ENCODE measurements at regions of chr11 and their contacts with region 1.

Region 1: DNA sequence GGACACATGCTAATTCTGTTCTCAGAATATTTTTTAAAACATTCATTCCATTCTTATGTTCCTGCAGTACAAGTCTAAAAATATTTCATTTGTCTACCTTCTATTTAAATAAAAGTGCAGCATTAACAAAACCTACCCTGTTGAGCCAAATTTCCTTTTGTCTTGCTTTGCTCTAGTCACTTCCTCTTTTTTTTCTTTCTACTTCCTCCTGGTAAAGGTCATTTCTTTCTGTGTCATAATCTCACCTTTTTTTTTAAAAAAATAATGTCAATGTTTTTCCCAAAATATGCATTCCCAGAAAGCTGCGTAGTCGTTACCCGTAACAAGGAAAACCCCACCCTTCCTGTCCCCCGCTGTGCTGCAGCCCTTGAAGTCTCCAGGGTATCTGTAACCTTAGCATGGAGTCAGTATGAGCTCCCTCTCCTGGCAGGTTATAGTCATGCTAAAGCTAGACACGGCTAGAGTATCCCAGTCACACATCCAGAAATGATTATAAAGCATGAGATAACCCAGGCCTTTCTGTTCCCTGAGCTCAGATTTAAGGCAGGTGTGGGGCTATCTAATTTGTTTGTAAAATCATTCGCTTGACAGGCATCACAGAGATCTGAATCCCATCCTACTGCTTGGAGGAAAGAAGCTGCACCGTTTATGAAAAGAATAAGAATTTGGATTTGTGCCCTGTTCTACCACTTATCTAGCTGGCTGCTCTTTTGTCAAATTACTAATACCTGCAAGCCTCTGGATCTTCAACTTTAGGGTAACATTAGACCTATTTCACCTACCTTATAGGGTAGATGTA is 51.1 kb upstream of the EED start:
- DNase-seq: peak; percentile 37 to 84
- ATAC-seq: peak; percentile 94 to 100 (median 99)
- H3K4me3 ChIP-seq: peak overlapping the region; percentile 12
- H3K4me3 Mint-ChIP-seq: peak overlapping the region; percentile 83
- H3K27ac ChIP-seq: peak overlapping the region; percentile 63
- H3K27ac Mint-ChIP-seq: peak overlapping the region; percentile 77 to 85
- H3K4me1 ChIP-seq: peaks cover 4% of the 10 kb centered on the region
- H3K4me1 Mint-ChIP-seq: peaks cover 15 to 16% of the 10 kb centered on the region in 2 donors
- H3K27me3 ChIP-seq: no peaks in the 10 kb centered on the region
- H3K27me3 Mint-ChIP-seq: no peaks in the 10 kb centered on the region
- CTCF ChIP-seq: peak; percentile 85

Region 2: DNA sequence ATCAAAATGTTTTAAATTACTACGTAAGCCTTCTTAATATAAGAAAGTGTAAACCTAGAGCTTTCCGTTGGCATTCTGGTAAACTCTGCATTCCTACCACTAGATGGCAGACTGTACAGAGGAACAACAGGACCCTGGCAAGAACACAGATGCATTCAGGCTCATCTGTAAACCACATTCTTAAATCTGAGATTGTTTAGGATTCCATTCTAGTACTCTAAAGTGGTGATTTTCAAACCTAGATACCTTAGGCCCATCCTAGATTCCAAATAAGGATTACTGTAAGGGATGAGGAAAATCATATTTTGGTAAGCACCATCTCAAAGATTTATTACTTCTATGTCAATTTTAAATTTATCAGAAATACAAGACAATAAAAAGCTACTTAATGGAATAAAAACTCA is 151.5 kb before region 1 on chr11:
- intact Hi-C with region 1: loop called (anchors 1 kb)
- DNase-seq: peak in 1 of 2 donors; percentile 88
- ATAC-seq: peak; percentile 92 to 95 (median 95)
- H3K4me3 ChIP-seq: no peak overlapping the region
- H3K4me3 Mint-ChIP-seq: peak overlapping the region; percentile 40
- H3K27ac ChIP-seq: no peak overlapping the region
- H3K27ac Mint-ChIP-seq: peak overlapping the region; percentile 76 to 83
- H3K4me1 ChIP-seq: peaks cover 22% of the 10 kb centered on the region
- H3K4me1 Mint-ChIP-seq: peaks cover 64 to 70% of the 10 kb centered on the region in 2 donors
- H3K27me3 ChIP-seq: no peaks in the 10 kb centered on the region
- H3K27me3 Mint-ChIP-seq: no peaks in the 10 kb centered on the region
- CTCF ChIP-seq: peak; percentile 94

Region 3: GRCh38 chr11:86068951-86069407 is 124.5 kb before region 1 on chr11 and contains the start of gene PICALM:
- intact Hi-C with region 1: loop called (anchors 2 kb)
- DNase-seq: peak; percentile 90 to 99
- ATAC-seq: peak; percentile 71 to 92 (median 81)
- H3K4me3 ChIP-seq: peak within 1 kb of the TSS; percentile 76
- H3K4me3 Mint-ChIP-seq: peak within 1 kb of the TSS; percentile 100
- H3K27ac ChIP-seq: peak within 1 kb of the TSS; percentile 91
- H3K27ac Mint-ChIP-seq: peak within 1 kb of the TSS; percentile 97 to 100
- H3K4me1 ChIP-seq: peaks cover 20% of the 10 kb centered on the region
- H3K4me1 Mint-ChIP-seq: peaks cover 47 to 49% of the 10 kb centered on the region in 2 donors
- H3K27me3 ChIP-seq: no peaks in the 10 kb centered on the region
- H3K27me3 Mint-ChIP-seq: no peaks in the 10 kb centered on the region
- CTCF ChIP-seq: no peak
- total RNA-seq, gene PICALM: 262 to 291 (median 285) TPM

Region 4: GRCh38 chr11:86091566-86091965 is 101.9 kb before region 1 on chr11:
- intact Hi-C with region 1: no loop called
- DNase-seq: no peak
- ATAC-seq: no peak
- H3K4me3 ChIP-seq: no peak overlapping the region
- H3K4me3 Mint-ChIP-seq: no peak overlapping the region
- H3K27ac ChIP-seq: no peak overlapping the region
- H3K27ac Mint-ChIP-seq: no peak overlapping the region
- H3K4me1 ChIP-seq: no peaks in the 10 kb centered on the region
- H3K4me1 Mint-ChIP-seq: no peaks in the 10 kb centered on the region
- H3K27me3 ChIP-seq: no peaks in the 10 kb centered on the region
- H3K27me3 Mint-ChIP-seq: peaks cover 0 to 5% of the 10 kb centered on the region in 2 donors
- CTCF ChIP-seq: no peak